GM12878 (cell line): ENCODE measurements at regions of chr11 and their contacts with region 1.

Region 1: GRCh38 chr11:118396097-118396501 is 5.3 kb upstream of the ATP5MG start:
- DNase-seq: no peak
- ATAC-seq: no peak
- H3K4me3 ChIP-seq: no peak overlapping the region
- H3K27ac ChIP-seq: no peak overlapping the region
- H3K4me1 ChIP-seq: peaks cover 10% of the 10 kb centered on the region; the same call in 1 of the 2 replicates
- H3K27me3 ChIP-seq: no peaks in the 10 kb centered on the region
- CTCF ChIP-seq: no peak
- EP300 ChIP-seq: no peak
- POLR2A ChIP-seq: no peak
- RAD21 ChIP-seq: no peak

Region 2: DNA sequence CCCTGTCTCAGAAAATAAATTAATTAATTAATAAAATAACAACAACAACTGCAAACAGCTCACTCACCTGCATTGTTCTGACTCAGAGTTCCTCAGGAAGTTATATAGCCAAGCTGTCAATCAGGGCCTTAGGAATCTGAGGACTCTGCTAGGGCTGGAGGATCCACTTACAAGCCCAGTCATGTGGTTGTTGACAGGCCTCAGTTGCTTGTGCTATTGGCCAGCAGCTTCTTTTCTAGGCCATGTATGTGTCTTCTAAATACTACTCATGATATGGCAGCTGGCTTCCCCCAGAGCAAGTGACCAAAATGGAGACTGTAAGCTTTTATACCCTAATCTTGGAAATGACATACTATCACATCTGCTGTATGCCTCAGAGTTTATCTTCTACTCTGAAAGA is 15.5 kb before region 1 on chr11:
- CTCF ChIA-PET with region 1: interaction called, 10 read pairs
- POLR2A ChIA-PET with region 1: no interaction called
- RAD21 ChIA-PET with region 1: no interaction called
- SMC1A ChIA-PET with region 1: interaction called, 10 read pairs
- in situ Hi-C with region 1: no loop called
- intact Hi-C with region 1: no loop called
- DNase-seq: no peak
- ATAC-seq: no peak
- H3K4me3 ChIP-seq: no peak overlapping the region
- H3K27ac ChIP-seq: no peak overlapping the region
- H3K4me1 ChIP-seq: no peaks in the 10 kb centered on the region
- H3K27me3 ChIP-seq: no peaks in the 10 kb centered on the region
- CTCF ChIP-seq: no peak
- EP300 ChIP-seq: no peak
- POLR2A ChIP-seq: no peak
- RAD21 ChIP-seq: no peak